ENCODE measurements at regions of chr17 and their contacts with region 1.

Region 1: GRCh38 chr17:16537130-16537458 is 31.9 kb downstream of the ZNF287 start:
- DNase-seq: no peak
- ATAC-seq: no peak
- H3K4me3 ChIP-seq: no peak overlapping the region
- H3K27ac ChIP-seq: no peak overlapping the region
- H3K4me1 ChIP-seq: no peaks in the 10 kb centered on the region
- H3K27me3 ChIP-seq: no peaks in the 10 kb centered on the region

Region 2: DNA sequence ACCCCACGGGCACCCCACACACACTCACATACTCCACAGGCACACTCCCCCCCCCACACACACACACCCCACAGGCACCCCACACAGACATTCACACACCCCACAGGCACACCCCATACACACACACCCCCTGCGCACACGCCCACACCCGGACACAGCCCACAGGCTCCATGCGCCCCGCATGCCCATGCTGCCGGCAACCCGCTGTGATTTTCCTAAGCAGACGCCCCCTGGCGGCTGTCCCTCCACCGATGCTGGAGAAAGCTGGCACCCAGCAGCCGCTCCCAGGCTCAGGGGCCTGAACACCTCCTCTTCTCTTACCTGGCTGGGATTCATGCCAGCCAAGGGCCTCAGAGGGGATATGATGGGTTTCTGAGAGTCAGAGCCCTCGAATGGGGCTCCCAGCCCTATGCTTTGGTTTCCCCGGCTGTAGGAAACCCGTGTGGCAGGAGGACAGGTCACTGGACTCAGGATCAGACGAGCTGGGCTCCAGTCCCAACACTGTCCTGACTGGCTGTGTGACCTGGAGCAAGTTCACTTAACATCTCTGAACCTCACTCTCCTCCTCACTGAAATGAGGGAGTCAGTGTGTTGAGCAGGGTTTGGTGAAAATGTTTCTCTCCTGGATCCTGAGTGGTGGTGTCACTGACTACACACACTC is 454.4 kb after region 1 on chr17:
- intact Hi-C with region 1: loop called in 1 of 4 experiments (anchors 10 kb)
- DNase-seq: peak; percentile 85 to 96 (median 94)
- ATAC-seq: peak; percentile 70 to 71
- H3K4me3 ChIP-seq: no peak overlapping the region
- H3K27ac ChIP-seq: no peak overlapping the region
- H3K4me1 ChIP-seq: no peaks in the 10 kb centered on the region
- H3K27me3 ChIP-seq: no peaks in the 10 kb centered on the region